ENCODE measurements at regions of chr5 and their contacts with region 1.

Region 1: DNA sequence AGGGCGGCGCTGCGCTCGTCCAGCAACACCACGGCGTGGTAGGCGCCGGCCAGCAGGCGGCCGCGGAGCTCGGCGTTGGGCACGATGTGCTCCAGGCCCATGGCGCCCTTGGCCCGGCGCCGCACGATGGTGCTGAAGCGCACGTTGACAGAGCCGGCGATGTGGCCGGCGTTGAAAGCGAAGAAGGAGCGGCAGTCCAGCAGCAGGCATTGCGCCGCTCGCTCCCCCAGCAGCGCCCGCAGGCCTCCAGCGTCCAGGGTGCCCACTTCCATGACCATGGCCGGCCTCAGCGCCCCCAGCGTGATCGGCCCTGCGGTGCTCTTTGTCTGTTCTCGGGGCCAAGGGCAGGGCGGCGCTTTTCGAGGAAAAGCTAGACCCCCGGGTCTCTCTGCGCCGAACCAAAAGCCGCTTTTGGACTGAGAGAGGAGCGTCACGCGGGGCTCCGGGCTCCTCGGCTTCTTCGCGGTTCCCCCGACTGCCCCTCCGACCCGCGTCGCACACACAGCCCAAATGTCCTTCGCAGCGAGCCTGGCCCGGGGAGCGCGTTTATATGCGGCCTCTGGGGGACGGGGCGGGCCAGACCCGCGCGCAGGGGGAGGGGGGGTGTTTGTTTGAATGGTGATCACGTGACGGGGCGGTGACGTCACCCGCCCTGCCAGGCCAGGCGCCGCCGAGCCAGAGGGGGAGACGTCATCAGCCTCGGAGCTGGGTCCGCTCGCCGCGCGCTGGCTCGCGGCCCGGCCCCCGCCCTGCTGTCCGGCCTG is at the start of gene DUSP1:
- DNase-seq: peak; percentile 97 to 99 (median 98)
- ATAC-seq: peak; percentile 82
- H3K4me3 ChIP-seq: peak within 1 kb of the TSS; percentile 84
- H3K27ac ChIP-seq: peak within 1 kb of the TSS; percentile 99
- H3K4me1 ChIP-seq: peaks cover 46 to 58% of the 10 kb centered on the region in 2 experiments
- H3K27me3 ChIP-seq: no peaks in the 10 kb centered on the region
- CTCF ChIP-seq: peak; percentile 72 to 98 (median 89)
- EP300 ChIP-seq: 0 out of 2 replicates have a peak, but pooled peaks have one; percentile 10
- POLR2A ChIP-seq: peak; percentile 99
- RAD21 ChIP-seq: peak; percentile 80 to 86
- polyA plus RNA-seq, gene DUSP1: 2.1 to 3.0 TPM

Region 2: GRCh38 chr5:172733131-172733973 is 37.5 kb before region 1 on chr5:
- CTCF ChIA-PET with region 1: no interaction called
- POLR2A ChIA-PET with region 1: interaction called, 10 read pairs
- in situ Hi-C with region 1: no loop called
- intact Hi-C with region 1: no loop called
- DNase-seq: peak in 1 of 4 experiments; percentile 27
- ATAC-seq: peak; percentile 58
- H3K4me3 ChIP-seq: no peak overlapping the region
- H3K27ac ChIP-seq: no peak overlapping the region
- H3K4me1 ChIP-seq: peaks cover 0 to 16% of the 10 kb centered on the region in 2 experiments; a peak in 2 of 5 replicates
- H3K27me3 ChIP-seq: peaks cover 0 to 16% of the 10 kb centered on the region in 2 experiments; a peak in 2 of 5 replicates
- CTCF ChIP-seq: no peak
- EP300 ChIP-seq: no peak
- POLR2A ChIP-seq: no peak
- RAD21 ChIP-seq: no peak

Region 3: GRCh38 chr5:172782169-172783039 is 11.5 kb after region 1 on chr5:
- CTCF ChIA-PET with region 1: no interaction called
- POLR2A ChIA-PET with region 1: interaction called, 51 read pairs
- in situ Hi-C with region 1: no loop called
- intact Hi-C with region 1: no loop called
- DNase-seq: no peak
- ATAC-seq: no peak
- H3K4me3 ChIP-seq: no peak overlapping the region
- H3K27ac ChIP-seq: peak overlapping the region; percentile 5; the same call in 1 of the 3 replicates
- H3K4me1 ChIP-seq: peaks cover 12 to 34% of the 10 kb centered on the region in 2 experiments
- H3K27me3 ChIP-seq: no peaks in the 10 kb centered on the region
- CTCF ChIP-seq: no peak
- EP300 ChIP-seq: no peak
- POLR2A ChIP-seq: no peak
- RAD21 ChIP-seq: no peak

Region 4: DNA sequence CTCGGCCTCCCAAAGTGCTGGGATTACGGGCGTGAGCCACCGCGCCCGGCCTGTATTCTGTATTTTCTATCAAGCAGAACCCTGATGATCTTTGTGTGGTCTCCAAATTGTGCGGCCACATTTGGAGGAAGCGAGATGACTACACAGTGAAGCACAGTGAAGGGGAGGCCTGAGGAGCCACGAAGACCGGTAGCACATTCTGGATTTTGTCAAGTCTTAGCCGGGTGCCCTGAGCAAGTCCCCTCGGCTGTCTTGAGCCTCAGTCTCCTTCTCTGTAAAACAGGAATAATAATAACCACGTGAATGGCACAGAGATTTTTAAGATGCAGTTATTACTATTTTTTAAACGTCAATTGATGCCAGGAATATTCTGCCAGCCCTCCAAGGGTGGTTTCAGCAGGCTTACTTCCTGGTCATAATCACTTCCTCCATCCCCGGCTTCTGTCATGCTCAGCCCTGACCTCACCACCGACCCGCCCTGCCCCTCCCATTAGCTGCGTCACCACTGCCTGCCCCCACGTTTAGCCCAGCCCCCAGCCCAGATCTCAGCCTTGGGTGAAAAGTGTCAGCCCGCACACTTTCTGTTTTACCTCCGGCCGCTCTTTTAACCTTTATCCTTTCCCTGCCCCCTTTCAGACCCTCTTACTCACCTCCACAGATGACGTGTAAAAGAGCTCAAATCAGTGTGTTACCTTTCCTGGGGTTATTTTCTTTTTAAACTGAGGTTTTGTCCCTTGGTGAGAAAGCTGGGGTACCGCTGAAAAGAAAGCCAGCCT is 36.2 kb after region 1 on chr5:
- CTCF ChIA-PET with region 1: no interaction called
- POLR2A ChIA-PET with region 1: interaction called, 21 read pairs
- in situ Hi-C with region 1: no loop called
- intact Hi-C with region 1: loop called (anchors 2 kb)
- DNase-seq: peak; percentile 88 to 97 (median 92)
- ATAC-seq: peak; percentile 92
- H3K4me3 ChIP-seq: peak overlapping the region; percentile 21
- H3K27ac ChIP-seq: peak overlapping the region; percentile 93
- H3K4me1 ChIP-seq: peaks cover 42 to 45% of the 10 kb centered on the region in 2 experiments; a peak in 4 of 5 replicates
- H3K27me3 ChIP-seq: no peaks in the 10 kb centered on the region
- CTCF ChIP-seq: no peak
- EP300 ChIP-seq: peak; percentile 48; the same call in 1 of the 2 replicates
- POLR2A ChIP-seq: peak; percentile 78
- RAD21 ChIP-seq: no peak

Region 5: GRCh38 chr5:172897481-172898217 is 126.8 kb after region 1 on chr5:
- CTCF ChIA-PET with region 1: interaction called, 15 read pairs
- POLR2A ChIA-PET with region 1: interaction called, 42 read pairs
- in situ Hi-C with region 1: no loop called
- intact Hi-C with region 1: loop called (anchors 2 kb)
- DNase-seq: no peak
- ATAC-seq: no peak
- H3K4me3 ChIP-seq: no peak overlapping the region
- H3K27ac ChIP-seq: no peak overlapping the region
- H3K4me1 ChIP-seq: peaks cover 21 to 25% of the 10 kb centered on the region in 2 experiments
- H3K27me3 ChIP-seq: no peaks in the 10 kb centered on the region
- CTCF ChIP-seq: no peak
- EP300 ChIP-seq: no peak
- POLR2A ChIP-seq: no peak
- RAD21 ChIP-seq: no peak

Region 6: DNA sequence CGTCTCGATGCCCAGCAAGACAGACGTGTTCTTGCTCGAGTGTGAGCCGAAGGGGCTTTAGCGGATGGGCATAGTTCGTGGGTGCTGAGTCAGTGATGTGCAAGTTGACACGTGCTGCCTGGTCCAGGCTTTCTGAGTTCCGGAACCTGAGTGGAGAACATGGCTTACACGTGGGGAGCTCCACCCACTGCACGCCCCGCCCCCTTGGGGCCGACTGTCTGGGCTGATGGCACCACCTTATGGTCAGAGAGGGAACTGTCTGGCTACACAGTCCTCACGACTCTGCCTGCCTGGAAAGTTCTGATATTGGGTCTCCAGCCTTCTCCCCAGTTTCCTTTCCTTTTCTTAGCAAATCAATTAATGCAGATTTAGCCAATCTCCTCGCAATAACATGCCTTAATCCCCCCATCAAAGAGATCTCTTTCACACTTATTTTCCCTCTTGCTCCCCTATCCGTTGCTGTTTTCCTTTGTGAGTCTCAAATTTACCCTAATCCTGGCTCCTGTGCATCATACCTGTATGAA is 561.2 kb after region 1 on chr5:
- CTCF ChIA-PET with region 1: no interaction called
- POLR2A ChIA-PET with region 1: no interaction called
- in situ Hi-C with region 1: no loop called
- intact Hi-C with region 1: loop called (anchors 10 kb)
- DNase-seq: peak; percentile 93 to 95 (median 94)
- ATAC-seq: peak; percentile 78
- H3K4me3 ChIP-seq: no peak overlapping the region
- H3K27ac ChIP-seq: no peak overlapping the region
- H3K4me1 ChIP-seq: peaks cover 4 to 25% of the 10 kb centered on the region in 2 experiments; a peak in 3 of 5 replicates
- H3K27me3 ChIP-seq: 0 out of 5 replicates have a peak, but pooled peaks cover 0 to 5% of the 10 kb centered on the region in 2 experiments
- CTCF ChIP-seq: peak; percentile 95 to 98 (median 97)
- EP300 ChIP-seq: no peak
- POLR2A ChIP-seq: no peak
- RAD21 ChIP-seq: peak; percentile 99

Measured in K562 (cell line).